Activated naive CD4-positive, alpha-beta T cell treated with anti-CD3 and anti-CD28 coated beads for 36 hours (primary cell): ENCODE measurements at regions of chr9 and their contacts with region 1.

Region 1: GRCh38 chr9:128455849-128456612 is at the start of gene ODF2:
- DNase-seq: peak; percentile 99
- H3K4me3 Mint-ChIP-seq: peak within 1 kb of the TSS; percentile 90
- H3K27ac Mint-ChIP-seq: peak within 1 kb of the TSS; percentile 84
- H3K4me1 Mint-ChIP-seq: peaks cover 15% of the 10 kb centered on the region
- H3K27me3 Mint-ChIP-seq: no peaks in the 10 kb centered on the region
- total RNA-seq, gene ODF2: 73.6 to 73.7 TPM

Region 2: DNA sequence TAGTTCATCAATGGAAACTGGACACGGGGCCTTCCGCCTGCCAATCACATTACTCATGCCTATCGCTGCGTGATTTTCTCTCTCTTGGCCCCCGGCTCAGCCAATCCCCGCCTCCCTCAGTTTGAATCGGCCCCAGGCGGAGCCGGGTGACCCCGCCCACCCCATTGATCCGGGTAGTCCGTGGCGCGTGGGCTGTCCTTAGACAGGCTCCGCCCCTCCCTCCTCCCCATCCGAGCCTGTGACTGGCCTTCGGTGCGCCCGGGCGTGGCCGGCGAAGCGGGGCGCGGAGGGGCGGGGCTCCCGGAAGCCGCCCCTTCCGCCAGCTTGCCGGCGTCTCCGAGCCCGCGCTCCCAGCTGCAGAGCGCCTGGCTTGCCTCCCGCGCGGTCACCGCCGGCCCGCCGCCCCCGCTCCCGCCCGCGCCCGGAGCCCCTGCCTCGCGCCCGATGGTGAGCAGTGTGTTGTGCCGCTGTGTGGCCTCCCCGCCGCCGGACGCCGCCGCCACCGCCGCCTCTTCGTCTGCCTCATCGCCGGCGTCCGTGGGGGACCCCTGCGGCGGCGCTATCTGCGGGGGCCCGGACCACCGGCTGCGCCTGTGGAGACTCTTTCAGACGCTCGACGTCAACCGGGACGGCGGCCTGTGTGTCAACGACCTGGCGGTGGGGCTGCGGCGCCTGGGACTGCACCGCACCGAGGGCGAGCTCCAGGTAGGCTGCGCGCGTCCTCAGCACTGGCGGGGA is 388.0 kb before region 1 on chr9 and contains the start of gene SLC25A25:
- CTCF ChIA-PET with region 1: no interaction called
- intact Hi-C with region 1: loop called (anchors 1 kb)
- DNase-seq: peak; percentile 100
- H3K4me3 Mint-ChIP-seq: no peak within 1 kb of the TSS
- H3K27ac Mint-ChIP-seq: peak within 1 kb of the TSS; percentile 86
- H3K4me1 Mint-ChIP-seq: peaks cover 56% of the 10 kb centered on the region
- H3K27me3 Mint-ChIP-seq: no peaks in the 10 kb centered on the region
- total RNA-seq, gene SLC25A25: 12.0 to 12.7 TPM

Region 3: GRCh38 chr9:128322404-128323211 is 133.4 kb before region 1 on chr9 and contains the starts of genes COQ4 and TRUB2:
- CTCF ChIA-PET with region 1: no interaction called
- intact Hi-C with region 1: loop called (anchors 1 kb)
- DNase-seq: peak; percentile 95
- H3K4me3 Mint-ChIP-seq: peak within 1 kb of the TSS; percentile 90
- H3K27ac Mint-ChIP-seq: peak within 1 kb of the TSS; percentile 94
- H3K4me1 Mint-ChIP-seq: peaks cover 22% of the 10 kb centered on the region
- H3K27me3 Mint-ChIP-seq: no peaks in the 10 kb centered on the region
- total RNA-seq, gene COQ4: 27.8 to 29.6 TPM
- total RNA-seq, gene TRUB2: 28.0 to 29.4 TPM

Region 4: DNA sequence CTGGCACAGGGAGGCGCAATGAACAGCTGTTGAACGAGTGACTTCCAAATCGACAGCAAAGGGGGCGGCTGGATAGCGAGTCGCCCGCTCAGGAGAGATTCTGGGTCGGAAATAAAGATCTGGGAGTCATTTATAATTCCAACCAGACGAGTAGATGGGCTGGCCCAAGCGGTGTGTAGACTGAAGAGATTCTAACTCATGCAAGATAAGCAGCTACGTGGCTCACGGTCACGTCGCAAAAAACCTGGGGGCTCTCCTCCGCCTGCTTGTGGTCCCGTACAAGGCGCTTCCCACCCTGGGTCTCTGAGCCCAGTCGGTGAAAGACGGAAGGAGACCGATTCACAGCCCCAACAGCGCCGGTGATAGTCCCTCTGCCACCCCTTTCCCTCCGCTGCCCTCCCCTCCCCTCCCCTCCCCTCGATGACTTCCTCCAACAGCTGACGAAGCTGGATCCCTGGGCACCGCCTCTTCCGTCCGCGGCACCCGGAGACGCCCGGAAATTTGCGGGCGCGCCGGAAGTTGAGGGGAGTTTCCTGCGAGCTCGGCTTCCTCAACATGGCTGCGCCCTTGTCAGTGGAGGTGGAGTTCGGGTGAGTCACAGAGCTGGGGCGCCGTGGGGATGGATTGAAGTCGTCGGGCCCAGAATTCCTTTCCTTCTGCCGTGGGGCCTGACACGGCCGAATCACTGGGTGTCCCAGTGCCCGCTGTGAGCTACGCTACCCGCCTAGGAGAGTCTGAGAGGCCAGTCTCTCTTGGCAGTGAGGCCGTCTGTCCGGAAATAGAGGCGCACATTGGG is 85.0 kb before region 1 on chr9 and contains the start of gene URM1:
- CTCF ChIA-PET with region 1: no interaction called
- intact Hi-C with region 1: loop called (anchors 2 kb)
- DNase-seq: peak; percentile 97
- H3K4me3 Mint-ChIP-seq: peak within 1 kb of the TSS; percentile 92
- H3K27ac Mint-ChIP-seq: peak within 1 kb of the TSS; percentile 92
- H3K4me1 Mint-ChIP-seq: peaks cover 28% of the 10 kb centered on the region
- H3K27me3 Mint-ChIP-seq: no peaks in the 10 kb centered on the region
- total RNA-seq, gene URM1: 44.4 to 45.2 TPM

Region 5: DNA sequence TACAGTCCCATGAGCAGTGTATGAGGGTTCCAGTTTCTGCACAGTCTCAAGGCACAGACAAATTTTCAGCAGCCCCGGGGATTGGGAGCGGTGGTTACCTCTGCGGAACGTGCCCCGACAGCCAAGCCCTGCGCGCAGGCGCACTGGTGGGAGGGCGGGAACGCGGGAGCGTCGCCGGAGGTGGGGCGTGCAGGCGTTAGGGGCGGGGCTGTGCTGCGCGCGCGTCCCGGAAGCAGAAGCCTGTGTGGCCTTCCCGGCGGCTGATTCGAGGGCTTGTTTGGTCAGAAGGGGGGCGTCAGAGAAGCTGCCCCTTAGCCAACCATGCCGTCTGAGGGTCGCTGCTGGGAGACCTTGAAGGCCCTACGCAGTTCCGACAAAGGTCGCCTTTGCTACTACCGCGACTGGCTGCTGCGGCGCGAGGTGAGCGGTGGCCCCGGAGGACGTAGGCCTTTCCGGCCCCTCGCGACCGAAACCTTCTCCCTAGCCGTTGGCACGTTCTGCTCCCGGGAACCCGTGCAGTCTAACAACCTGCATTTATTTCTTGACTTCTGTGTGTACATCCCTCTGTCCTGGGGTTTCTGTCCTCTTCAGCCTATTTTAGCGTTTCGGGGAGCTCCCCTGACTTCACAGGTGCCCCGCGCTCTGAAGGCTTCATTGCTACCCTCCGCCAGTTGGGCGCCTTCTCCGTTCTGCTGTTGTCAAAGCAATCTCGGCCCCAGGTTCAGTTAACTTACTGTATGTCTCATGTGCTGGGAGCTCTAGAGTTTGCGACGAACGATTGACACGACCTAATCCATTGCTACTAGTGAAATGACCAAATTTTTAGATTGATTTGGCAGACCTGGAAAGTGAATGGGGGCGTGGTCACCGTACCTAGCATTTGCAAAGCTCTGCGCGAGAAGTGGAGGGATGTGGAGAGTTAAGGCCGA is 48.7 kb after region 1 on chr9 and contains the start of gene GLE1:
- CTCF ChIA-PET with region 1: interaction called, 3 read pairs
- intact Hi-C with region 1: loop called (anchors 2 kb)
- DNase-seq: peak; percentile 96
- H3K4me3 Mint-ChIP-seq: peak within 1 kb of the TSS; percentile 92
- H3K27ac Mint-ChIP-seq: peak within 1 kb of the TSS; percentile 91
- H3K4me1 Mint-ChIP-seq: peaks cover 26% of the 10 kb centered on the region
- H3K27me3 Mint-ChIP-seq: no peaks in the 10 kb centered on the region
- total RNA-seq, gene GLE1: 48.7 to 51.6 TPM

Region 6: DNA sequence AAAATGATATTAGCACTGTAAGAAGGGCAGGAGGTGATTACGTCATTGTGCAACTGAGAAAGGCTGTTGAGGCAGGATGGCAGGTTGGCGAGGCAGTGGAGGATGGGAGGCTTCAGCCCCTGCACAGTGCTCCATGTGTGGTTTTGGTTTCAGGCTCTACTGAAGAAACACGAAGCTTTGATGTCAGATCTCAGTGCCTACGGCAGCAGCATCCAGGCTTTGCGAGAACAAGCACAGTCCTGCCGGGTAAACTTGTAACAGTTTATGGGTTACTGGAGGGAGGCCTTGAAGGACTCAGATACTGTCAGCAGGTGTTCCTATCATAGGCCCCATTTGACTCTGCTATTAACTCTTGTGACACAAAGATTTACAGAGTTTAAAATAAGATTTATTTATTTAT is 131.4 kb after region 1 on chr9:
- CTCF ChIA-PET with region 1: no interaction called
- intact Hi-C with region 1: loop called (anchors 10 kb)
- DNase-seq: peak; percentile 87
- H3K4me3 Mint-ChIP-seq: peak overlapping the region; percentile 4
- H3K27ac Mint-ChIP-seq: peak overlapping the region; percentile 91
- H3K4me1 Mint-ChIP-seq: peaks cover 19% of the 10 kb centered on the region
- H3K27me3 Mint-ChIP-seq: no peaks in the 10 kb centered on the region

Region 7: DNA sequence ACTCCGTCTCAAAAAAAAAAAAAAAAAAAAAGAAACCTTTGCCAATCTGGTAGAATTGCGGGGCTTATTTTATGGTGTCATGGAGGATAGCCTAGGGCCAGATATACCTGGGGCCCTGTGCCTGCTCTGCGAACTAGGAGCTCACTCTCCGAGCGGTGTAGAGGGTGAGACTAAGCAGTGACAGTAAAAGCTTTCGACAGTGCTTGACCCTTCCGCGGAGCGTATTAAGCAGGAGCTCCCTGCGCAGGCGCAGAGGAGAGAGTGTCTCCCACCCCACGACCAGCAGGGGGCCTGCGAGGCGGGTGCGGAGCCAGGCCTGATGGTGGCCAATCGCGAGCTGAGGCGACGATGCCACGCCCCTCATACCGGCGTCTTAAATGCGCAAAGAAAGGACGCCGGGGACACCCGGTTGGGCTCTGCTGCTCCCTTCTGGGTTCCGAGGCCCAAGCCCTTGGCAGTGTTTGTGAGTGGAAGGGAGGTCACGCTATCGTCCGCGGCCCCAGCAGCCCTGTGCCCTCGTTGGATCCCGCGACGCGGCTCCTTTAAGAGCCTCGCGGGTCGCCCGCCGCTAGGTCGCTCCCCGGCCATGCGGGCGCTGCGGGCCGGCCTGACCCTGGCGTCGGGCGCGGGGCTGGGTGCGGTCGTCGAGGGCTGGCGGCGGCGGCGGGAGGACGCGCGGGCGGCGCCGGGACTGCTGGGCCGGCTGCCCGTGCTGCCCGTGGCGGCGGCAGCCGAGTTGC is 362.2 kb after region 1 on chr9 and contains the start of gene ENDOG:
- CTCF ChIA-PET with region 1: no interaction called
- intact Hi-C with region 1: no loop called
- DNase-seq: peak; percentile 98
- H3K4me3 Mint-ChIP-seq: peak within 1 kb of the TSS; percentile 82
- H3K27ac Mint-ChIP-seq: peak within 1 kb of the TSS; percentile 24
- H3K4me1 Mint-ChIP-seq: peaks cover 22% of the 10 kb centered on the region
- H3K27me3 Mint-ChIP-seq: no peaks in the 10 kb centered on the region
- total RNA-seq, gene ENDOG: 9.9 to 10.3 TPM